Activated CD8-positive, alpha-beta T cell treated with anti-CD3 and anti-CD28 coated beads, Interleukin-2, amount 10 ng/mL, durations not matched to agents 7 days and 5 days (primary cell): ENCODE measurements at regions of chr17 and their contacts with region 1.

Region 1: GRCh38 chr17:44170499-44171201 is at the start of gene ASB16:
- DNase-seq: no peak
- ATAC-seq: no peak
- H3K4me3 Mint-ChIP-seq: no peak within 1 kb of the TSS
- H3K27ac Mint-ChIP-seq: no peak within 1 kb of the TSS
- H3K4me1 Mint-ChIP-seq: peaks cover 7% of the 10 kb centered on the region
- H3K27me3 Mint-ChIP-seq: no peaks in the 10 kb centered on the region
- total RNA-seq, gene ASB16: 0.26 to 0.42 TPM

Region 2: DNA sequence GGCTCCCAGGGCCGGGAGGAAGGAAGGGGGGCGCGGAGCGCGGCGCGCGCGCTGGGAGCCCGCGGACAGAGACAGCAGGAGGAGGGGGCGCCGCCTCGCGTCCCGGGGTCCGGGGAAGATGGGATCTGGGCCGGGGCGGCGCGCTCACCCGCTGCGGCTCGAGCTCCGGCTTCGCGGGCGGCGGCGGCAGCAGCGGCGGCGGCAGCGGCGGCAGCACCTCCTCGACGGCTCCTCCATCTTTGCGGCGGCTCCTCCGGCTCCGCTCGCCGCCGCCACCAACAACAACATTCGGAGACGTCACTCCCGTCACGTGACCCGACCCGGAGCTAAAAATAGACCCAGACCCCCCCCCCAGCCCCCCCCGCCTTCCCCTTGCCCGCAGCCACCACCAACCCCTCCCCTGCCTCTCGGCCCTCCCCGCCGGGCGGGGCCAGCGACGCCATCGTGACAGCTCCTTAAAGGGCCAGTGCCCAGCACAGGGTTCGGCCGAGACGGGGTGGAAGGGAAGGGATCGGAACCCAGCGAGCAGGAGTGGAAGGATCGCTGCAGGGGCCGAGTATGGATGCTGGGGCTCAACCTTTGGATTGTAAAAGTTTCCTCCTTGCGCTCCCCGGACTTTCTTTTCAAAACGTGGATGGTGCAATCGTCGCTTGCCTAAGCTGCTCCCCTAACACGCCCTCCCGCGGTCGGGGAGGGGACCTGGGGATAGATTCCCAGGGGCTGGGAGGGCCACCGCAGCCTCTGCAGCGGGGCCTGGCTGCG is 47.1 kb before region 1 on chr17 and contains the start of gene HDAC5:
- CTCF ChIA-PET with region 1: interaction called, 14 read pairs
- POLR2A ChIA-PET with region 1: interaction called, 14 read pairs
- DNase-seq: peak; percentile 96
- ATAC-seq: peak; percentile 92
- H3K4me3 Mint-ChIP-seq: peak within 1 kb of the TSS; percentile 90
- H3K27ac Mint-ChIP-seq: peak within 1 kb of the TSS; percentile 98
- H3K4me1 Mint-ChIP-seq: peaks cover 16% of the 10 kb centered on the region
- H3K27me3 Mint-ChIP-seq: peaks cover 5% of the 10 kb centered on the region
- total RNA-seq, gene HDAC5: 24.0 to 24.9 TPM

Region 3: GRCh38 chr17:44146375-44147346 is 24.0 kb before region 1 on chr17:
- CTCF ChIA-PET with region 1: interaction called, 11 read pairs
- POLR2A ChIA-PET with region 1: no interaction called
- DNase-seq: no peak
- ATAC-seq: no peak
- H3K4me3 Mint-ChIP-seq: no peak overlapping the region
- H3K27ac Mint-ChIP-seq: peak overlapping the region; percentile 12
- H3K4me1 Mint-ChIP-seq: peaks cover 28% of the 10 kb centered on the region
- H3K27me3 Mint-ChIP-seq: no peaks in the 10 kb centered on the region

Region 4: GRCh38 chr17:44159519-44160210 is 11.0 kb before region 1 on chr17:
- CTCF ChIA-PET with region 1: interaction called, 12 read pairs
- POLR2A ChIA-PET with region 1: interaction called, 3 read pairs
- DNase-seq: no peak
- ATAC-seq: no peak
- H3K4me3 Mint-ChIP-seq: no peak overlapping the region
- H3K27ac Mint-ChIP-seq: no peak overlapping the region
- H3K4me1 Mint-ChIP-seq: peaks cover 5% of the 10 kb centered on the region
- H3K27me3 Mint-ChIP-seq: no peaks in the 10 kb centered on the region

Region 5: DNA sequence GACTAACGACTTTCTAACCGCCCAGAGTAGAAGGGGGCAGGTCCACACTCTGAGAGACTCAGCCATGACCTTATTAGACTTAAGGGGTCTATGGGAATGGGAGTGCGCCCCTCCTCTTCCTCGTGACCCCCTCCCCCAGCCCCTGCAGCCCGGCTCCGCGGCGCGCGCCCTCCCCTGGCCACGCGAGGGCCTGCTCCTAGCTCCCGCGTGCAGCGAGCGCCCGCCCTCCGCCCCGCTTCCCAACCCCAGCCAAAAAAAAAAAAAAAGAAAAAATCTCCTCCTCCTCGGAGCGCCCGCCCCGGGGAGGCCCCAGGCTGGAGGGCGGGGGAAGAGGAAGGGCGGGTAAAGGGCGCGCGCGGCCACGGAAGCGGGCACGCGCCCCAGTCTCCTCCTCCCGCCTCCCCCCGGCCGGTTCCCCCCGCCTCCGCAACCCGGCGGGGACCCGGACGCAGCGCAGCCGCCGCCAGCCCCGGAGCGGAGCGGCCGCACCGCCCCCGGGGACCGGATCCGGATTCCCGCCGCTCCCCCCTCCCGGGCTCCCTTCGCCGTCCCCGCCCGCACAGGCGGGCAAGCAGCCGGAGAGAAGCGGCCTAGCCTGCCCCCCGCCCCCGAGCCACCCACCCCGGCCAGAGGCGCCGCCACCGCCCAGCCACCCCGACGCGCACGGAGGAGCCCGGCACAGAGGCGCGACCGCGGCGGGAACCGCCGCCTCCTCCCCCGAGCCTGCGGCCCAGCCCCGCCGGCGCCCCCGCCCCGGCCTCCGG is 47.9 kb after region 1 on chr17:
- CTCF ChIA-PET with region 1: no interaction called
- POLR2A ChIA-PET with region 1: no interaction called
- DNase-seq: peak; percentile 90
- ATAC-seq: peak; percentile 60
- H3K4me3 Mint-ChIP-seq: peak overlapping the region; percentile 97
- H3K27ac Mint-ChIP-seq: peak overlapping the region; percentile 85
- H3K4me1 Mint-ChIP-seq: peaks cover 46% of the 10 kb centered on the region
- H3K27me3 Mint-ChIP-seq: no peaks in the 10 kb centered on the region

Region 6: GRCh38 chr17:44247440-44247841 is 76.8 kb after region 1 on chr17:
- CTCF ChIA-PET with region 1: no interaction called
- POLR2A ChIA-PET with region 1: no interaction called
- DNase-seq: no peak
- ATAC-seq: no peak
- H3K4me3 Mint-ChIP-seq: no peak overlapping the region
- H3K27ac Mint-ChIP-seq: peak overlapping the region; percentile 86
- H3K4me1 Mint-ChIP-seq: peaks cover 48% of the 10 kb centered on the region
- H3K27me3 Mint-ChIP-seq: no peaks in the 10 kb centered on the region